K562 (cell line): ENCODE measurements at regions of chr4 and their contacts with region 1.

Region 1: GRCh38 chr4:112170451-112170993 is 25.3 kb downstream of the FAM241A start:
- DNase-seq: peak; percentile 55 to 84 (median 66)
- ATAC-seq: peak; percentile 92
- H3K4me3 ChIP-seq: no peak overlapping the region
- H3K27ac ChIP-seq: peak overlapping the region; percentile 89
- H3K4me1 ChIP-seq: peaks cover 5 to 22% of the 10 kb centered on the region in 2 experiments; a peak in 4 of 5 replicates
- H3K27me3 ChIP-seq: no peaks in the 10 kb centered on the region
- CTCF ChIP-seq: no peak
- EP300 ChIP-seq: peak; percentile 83
- POLR2A ChIP-seq: no peak
- RAD21 ChIP-seq: no peak

Region 2: DNA sequence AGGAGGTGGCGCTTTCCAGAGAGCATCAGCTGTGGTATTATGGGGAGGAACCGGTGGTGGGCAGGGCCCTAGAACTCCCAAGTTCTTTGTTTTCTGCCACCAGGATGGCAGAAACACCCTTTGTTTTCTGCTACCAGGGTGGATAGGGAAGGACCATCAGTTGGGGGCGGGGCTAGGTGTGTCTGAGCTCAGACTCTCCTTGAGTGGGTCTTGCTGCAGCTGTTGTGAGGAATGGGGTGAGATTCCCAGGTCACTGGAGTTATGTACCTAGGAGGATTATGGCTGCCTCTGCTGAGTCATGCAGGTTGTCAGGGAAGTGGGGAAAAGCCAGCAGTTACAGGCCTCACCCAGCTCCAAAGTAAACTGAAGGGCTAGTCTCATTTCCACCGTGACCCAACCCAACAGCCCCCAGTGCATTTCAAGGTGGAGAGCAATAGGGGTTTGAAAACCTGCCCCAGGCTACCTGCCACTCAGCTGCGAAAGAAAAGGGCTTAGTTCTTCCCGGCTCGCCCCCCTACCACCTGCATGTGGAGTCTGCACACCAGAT is 193.0 kb before region 1 on chr4:
- CTCF ChIA-PET with region 1: no interaction called
- POLR2A ChIA-PET with region 1: no interaction called
- in situ Hi-C with region 1: no loop called
- intact Hi-C with region 1: no loop called
- DNase-seq: no peak
- ATAC-seq: no peak
- H3K4me3 ChIP-seq: no peak overlapping the region
- H3K27ac ChIP-seq: no peak overlapping the region
- H3K4me1 ChIP-seq: no peaks in the 10 kb centered on the region
- H3K27me3 ChIP-seq: no peaks in the 10 kb centered on the region
- CTCF ChIP-seq: no peak
- EP300 ChIP-seq: no peak
- POLR2A ChIP-seq: no peak
- RAD21 ChIP-seq: no peak

Region 3: DNA sequence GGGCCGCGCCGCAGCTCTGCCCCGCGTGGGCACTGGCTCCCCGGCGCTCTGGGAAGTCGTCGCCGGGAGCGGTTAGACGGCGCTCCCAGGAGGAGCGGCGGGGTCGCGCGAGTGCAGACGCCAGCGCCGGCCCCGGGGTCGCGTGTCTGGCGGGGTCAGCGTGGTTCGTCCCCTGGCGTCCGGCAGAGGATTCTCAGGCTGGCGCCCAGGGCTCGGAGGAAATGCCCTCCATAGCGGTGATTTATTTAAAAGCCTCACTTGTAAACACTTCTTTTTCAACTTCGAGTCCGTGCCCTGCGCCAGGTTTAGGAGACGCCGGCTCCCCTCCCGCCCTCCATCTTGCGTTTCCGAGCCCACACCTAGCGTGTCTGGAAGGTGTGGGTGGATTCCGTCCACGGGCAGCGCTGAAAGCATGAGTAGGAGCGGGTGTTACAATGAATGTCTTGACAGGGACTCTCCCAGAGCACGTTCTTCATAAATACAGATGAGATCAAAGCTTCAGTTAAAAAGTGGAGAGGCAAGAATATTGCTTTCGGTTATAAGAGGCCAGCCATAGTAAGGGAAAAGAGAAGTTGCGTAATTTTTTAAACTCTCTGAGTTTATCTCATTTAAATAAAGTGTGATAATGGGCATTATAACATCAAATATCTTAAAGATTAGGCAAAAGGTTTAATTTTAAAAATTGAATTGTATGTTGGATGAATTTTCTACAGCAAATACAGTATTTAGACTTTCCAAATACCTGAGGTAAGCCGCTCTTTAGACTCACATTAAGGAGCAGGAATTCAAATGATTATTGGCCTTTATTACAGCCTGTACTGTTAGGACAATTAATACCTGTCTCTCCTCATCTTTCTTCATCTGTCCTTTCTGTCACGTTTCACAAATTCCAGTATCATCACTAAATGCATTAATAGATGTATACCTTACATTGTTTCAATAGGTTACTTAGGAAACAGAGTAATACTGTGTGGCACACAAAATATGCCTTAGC is 24.4 kb before region 1 on chr4:
- CTCF ChIA-PET with region 1: no interaction called
- POLR2A ChIA-PET with region 1: interaction called, 8 read pairs
- in situ Hi-C with region 1: no loop called
- intact Hi-C with region 1: loop called (anchors 1 kb)
- DNase-seq: peak; percentile 42 to 67 (median 52)
- ATAC-seq: peak; percentile 65
- H3K4me3 ChIP-seq: peak overlapping the region; percentile 65
- H3K27ac ChIP-seq: peak overlapping the region; percentile 79
- H3K4me1 ChIP-seq: peaks cover 10% of the 10 kb centered on the region in 2 experiments; a peak in 3 of 5 replicates
- H3K27me3 ChIP-seq: no peaks in the 10 kb centered on the region
- CTCF ChIP-seq: peak in 1 of 3 experiments; percentile 1; a peak in 1 of 6 replicates
- EP300 ChIP-seq: no peak
- POLR2A ChIP-seq: 0 out of 2 replicates have a peak, but pooled peaks have one; percentile 12
- RAD21 ChIP-seq: no peak